ENCODE measurements at regions of chr11 and their contacts with region 1.

Region 1: GRCh38 chr11:128595221-128595620 is 7.9 kb upstream of the ETS1 start:
- DNase-seq: no peak
- H3K4me3 ChIP-seq: no peak overlapping the region
- H3K4me3 Mint-ChIP-seq: no peak overlapping the region
- H3K27ac ChIP-seq: no peak overlapping the region
- H3K27ac Mint-ChIP-seq: no peak overlapping the region
- H3K4me1 ChIP-seq: no peaks in the 10 kb centered on the region
- H3K4me1 Mint-ChIP-seq: peaks cover 0 to 8% (median 4%) of the 10 kb centered on the region in 4 donors
- H3K27me3 ChIP-seq: no peaks in the 10 kb centered on the region
- H3K27me3 Mint-ChIP-seq: no peaks in the 10 kb centered on the region

Region 2: GRCh38 chr11:128552783-128553661 is 42.2 kb before region 1 on chr11:
- CTCF ChIA-PET with region 1: no interaction called
- POLR2A ChIA-PET with region 1: interaction called, 3 read pairs
- intact Hi-C with region 1: loop called (anchors 5 kb)
- DNase-seq: peak in 4 of 5 donors; percentile 16 to 41 (median 30)
- H3K4me3 ChIP-seq: no peak overlapping the region
- H3K4me3 Mint-ChIP-seq: peak overlapping the region; percentile 45 to 69 (median 64)
- H3K27ac ChIP-seq: peak overlapping the region; percentile 28
- H3K27ac Mint-ChIP-seq: peak overlapping the region; percentile 73 to 94 (median 87)
- H3K4me1 ChIP-seq: peaks cover 59% of the 10 kb centered on the region
- H3K4me1 Mint-ChIP-seq: peaks cover 42 to 62% (median 50%) of the 10 kb centered on the region in 4 donors
- H3K27me3 ChIP-seq: no peaks in the 10 kb centered on the region
- H3K27me3 Mint-ChIP-seq: no peaks in the 10 kb centered on the region